Common myeloid progenitor, CD34-positive (primary cell): ENCODE measurements at regions of chr2 and their contacts with region 1.

Region 1: GRCh38 chr2:68742626-68743415 is 8.2 kb downstream of the ARHGAP25 start:
- DNase-seq: peak; percentile 45 to 91 (median 86)
- H3K4me3 ChIP-seq: peak overlapping the region in 4 of 7 experiments; percentile 21 to 44 (median 27)
- H3K27ac ChIP-seq: peak overlapping the region; percentile 4 to 62
- H3K4me1 ChIP-seq: peaks cover 60 to 98% (median 91%) of the 10 kb centered on the region in 4 experiments
- H3K27me3 ChIP-seq: no peaks in the 10 kb centered on the region

Region 2: GRCh38 chr2:68662466-68662865 is 80.4 kb before region 1 on chr2:
- CTCF ChIA-PET with region 1: no interaction called
- POLR2A ChIA-PET with region 1: no interaction called
- DNase-seq: peak in 2 of 3 donors; percentile 48 to 53
- H3K4me3 ChIP-seq: no peak overlapping the region
- H3K27ac ChIP-seq: no peak overlapping the region
- H3K4me1 ChIP-seq: peaks cover 0 to 9% (median 4%) of the 10 kb centered on the region in 4 experiments
- H3K27me3 ChIP-seq: no peaks in the 10 kb centered on the region

Region 3: DNA sequence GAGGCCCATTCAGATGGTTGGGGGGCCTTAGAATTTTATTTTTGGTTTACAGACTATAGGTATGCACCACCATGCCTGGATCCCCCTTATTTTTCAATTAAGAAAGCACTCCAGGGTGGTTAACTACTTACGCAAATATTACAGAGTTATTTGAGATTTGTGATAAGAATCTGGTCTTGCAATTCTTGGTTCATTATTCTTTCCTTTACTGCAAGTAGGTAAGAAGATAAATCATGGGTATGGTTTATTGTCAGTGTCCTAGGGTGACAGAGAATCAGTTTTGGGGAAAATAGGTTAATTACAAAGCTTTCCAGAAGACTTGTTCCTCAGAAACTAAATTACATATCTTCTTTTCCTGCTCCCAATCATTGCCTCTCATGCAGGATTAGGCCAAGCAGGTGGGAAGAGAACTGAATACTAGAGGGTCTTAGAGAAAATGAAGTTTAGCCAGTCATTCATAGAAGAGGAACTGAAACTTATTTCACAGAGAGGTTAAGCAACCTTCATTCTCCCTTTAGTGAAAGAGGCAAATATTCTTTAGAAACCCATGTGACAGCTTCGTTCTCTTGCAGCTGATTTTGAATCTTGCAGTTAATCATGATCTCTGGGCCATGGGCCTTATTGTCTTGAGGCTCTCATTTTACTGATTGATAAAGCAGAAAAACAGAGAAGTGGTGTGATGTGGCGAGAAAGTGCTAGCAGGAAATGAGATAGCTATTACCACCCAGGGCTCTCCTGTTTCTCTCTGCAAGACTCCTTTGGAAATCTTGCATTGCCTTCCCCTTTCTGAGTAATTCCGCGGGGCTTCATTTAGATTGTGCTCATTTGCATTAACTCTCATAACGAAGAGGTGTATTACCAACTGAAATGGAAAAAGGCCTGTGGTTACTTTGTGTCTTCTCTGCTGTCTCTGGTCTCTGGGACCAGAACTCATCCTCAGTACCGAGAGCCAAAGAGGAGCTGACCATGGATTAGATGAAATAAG is 53.0 kb before region 1 on chr2:
- CTCF ChIA-PET with region 1: no interaction called
- POLR2A ChIA-PET with region 1: no interaction called
- DNase-seq: peak; percentile 40 to 84 (median 73)
- H3K4me3 ChIP-seq: peak overlapping the region in 5 of 7 experiments; percentile 16 to 49 (median 41)
- H3K27ac ChIP-seq: peak overlapping the region in 1 of 2 experiments; percentile 22
- H3K4me1 ChIP-seq: peaks cover 19 to 42% (median 24%) of the 10 kb centered on the region in 4 experiments
- H3K27me3 ChIP-seq: no peaks in the 10 kb centered on the region

Region 4: DNA sequence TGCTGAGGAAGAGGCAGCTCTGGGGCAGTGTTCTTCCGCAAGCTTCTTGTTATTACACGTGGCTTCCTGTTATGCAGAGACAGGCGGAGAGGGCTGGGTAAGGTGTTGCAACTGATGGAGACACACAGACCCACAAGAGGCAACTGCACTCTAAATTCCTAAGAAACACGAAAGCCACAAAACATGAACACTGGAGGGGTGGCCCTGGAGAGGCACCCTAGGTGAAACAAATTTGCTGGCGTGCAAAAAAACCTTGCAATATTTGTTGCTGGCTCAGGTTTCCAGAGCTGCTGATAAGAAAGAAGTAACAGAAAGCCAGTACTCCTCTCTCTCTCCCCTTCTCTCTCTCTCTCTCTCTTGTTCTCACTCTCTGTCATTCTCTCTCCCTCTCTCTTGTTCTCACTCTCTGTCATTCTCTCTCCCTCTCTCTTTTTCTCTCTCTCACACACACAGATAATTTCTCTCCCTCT is 23.6 kb after region 1 on chr2:
- CTCF ChIA-PET with region 1: interaction called, 10 read pairs
- POLR2A ChIA-PET with region 1: no interaction called
- DNase-seq: peak; percentile 50 to 89 (median 84)
- H3K4me3 ChIP-seq: peak overlapping the region in 6 of 7 experiments; percentile 16 to 50 (median 36)
- H3K27ac ChIP-seq: peak overlapping the region; percentile 29 to 79
- H3K4me1 ChIP-seq: peaks cover 81 to 100% (median 95%) of the 10 kb centered on the region in 4 experiments
- H3K27me3 ChIP-seq: no peaks in the 10 kb centered on the region

Region 5: DNA sequence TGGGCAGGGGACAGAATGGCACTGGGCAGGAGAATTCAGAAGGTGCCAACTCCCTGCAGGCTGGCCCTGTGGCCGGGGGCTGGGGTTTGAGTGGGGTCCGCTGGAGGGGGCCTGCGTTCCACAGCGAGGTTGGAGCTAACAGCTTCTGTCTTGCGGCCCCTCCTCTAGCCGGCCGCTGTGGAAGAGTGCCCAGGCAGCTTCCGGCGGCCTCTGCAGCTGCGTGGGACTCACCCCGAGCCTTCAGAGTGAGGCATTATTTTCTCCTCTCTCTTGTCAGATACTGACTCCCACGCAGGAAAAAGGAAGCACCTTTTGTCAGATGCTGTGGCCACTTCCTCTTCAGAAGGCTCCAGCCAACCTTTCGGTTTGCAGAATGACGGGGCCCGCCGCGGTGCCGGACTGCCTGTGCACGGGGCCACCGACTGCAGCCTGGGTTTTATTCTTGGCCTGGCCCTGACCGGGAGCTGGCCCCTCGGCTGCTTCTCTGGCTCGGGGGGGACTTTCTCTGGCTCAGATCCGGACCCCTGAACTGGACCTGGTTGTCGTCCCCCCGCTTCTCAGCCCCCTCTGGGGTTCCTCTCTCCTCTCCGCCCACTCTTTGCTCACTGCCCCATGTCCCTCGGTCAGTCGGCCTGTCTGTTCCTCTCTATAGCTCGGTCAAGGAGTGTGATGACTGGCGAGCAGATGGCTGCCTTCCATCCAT is 31.9 kb after region 1 on chr2:
- CTCF ChIA-PET with region 1: interaction called, 56 read pairs
- POLR2A ChIA-PET with region 1: no interaction called
- DNase-seq: peak; percentile 87 to 97 (median 95)
- H3K4me3 ChIP-seq: peak overlapping the region in 6 of 7 experiments; percentile 36 to 70 (median 58)
- H3K27ac ChIP-seq: peak overlapping the region; percentile 58 to 82
- H3K4me1 ChIP-seq: peaks cover 38 to 87% (median 78%) of the 10 kb centered on the region in 4 experiments
- H3K27me3 ChIP-seq: no peaks in the 10 kb centered on the region

Region 6: GRCh38 chr2:68934021-68934420 is 191.2 kb after region 1 on chr2:
- CTCF ChIA-PET with region 1: no interaction called
- POLR2A ChIA-PET with region 1: no interaction called
- DNase-seq: no peak
- H3K4me3 ChIP-seq: no peak overlapping the region
- H3K27ac ChIP-seq: no peak overlapping the region
- H3K4me1 ChIP-seq: no peaks in the 10 kb centered on the region
- H3K27me3 ChIP-seq: no peaks in the 10 kb centered on the region